Activated CD4-positive, alpha-beta T cell treated with anti-CD3 and anti-CD28 coated beads, Interleukin-2, amount 10 ng/mL, durations not matched to agents 7 days and 5 days (primary cell): ENCODE measurements at regions of chr19 and their contacts with region 1.

Region 1: GRCh38 chr19:35716801-35717666 is 769 bp upstream of the KMT2B start:
- DNase-seq: peak; percentile 97
- H3K4me3 Mint-ChIP-seq: peak overlapping the region; percentile 87
- H3K27ac Mint-ChIP-seq: peak overlapping the region; percentile 94
- H3K4me1 Mint-ChIP-seq: peaks cover 66% of the 10 kb centered on the region
- H3K27me3 Mint-ChIP-seq: no peaks in the 10 kb centered on the region

Region 2: GRCh38 chr19:35693830-35694599 is 23.0 kb before region 1 on chr19:
- CTCF ChIA-PET with region 1: interaction called, 72 read pairs
- POLR2A ChIA-PET with region 1: interaction called, 3 read pairs
- DNase-seq: peak; percentile 94
- H3K4me3 Mint-ChIP-seq: no peak overlapping the region
- H3K27ac Mint-ChIP-seq: no peak overlapping the region
- H3K4me1 Mint-ChIP-seq: peaks cover 19% of the 10 kb centered on the region
- H3K27me3 Mint-ChIP-seq: no peaks in the 10 kb centered on the region

Region 3: DNA sequence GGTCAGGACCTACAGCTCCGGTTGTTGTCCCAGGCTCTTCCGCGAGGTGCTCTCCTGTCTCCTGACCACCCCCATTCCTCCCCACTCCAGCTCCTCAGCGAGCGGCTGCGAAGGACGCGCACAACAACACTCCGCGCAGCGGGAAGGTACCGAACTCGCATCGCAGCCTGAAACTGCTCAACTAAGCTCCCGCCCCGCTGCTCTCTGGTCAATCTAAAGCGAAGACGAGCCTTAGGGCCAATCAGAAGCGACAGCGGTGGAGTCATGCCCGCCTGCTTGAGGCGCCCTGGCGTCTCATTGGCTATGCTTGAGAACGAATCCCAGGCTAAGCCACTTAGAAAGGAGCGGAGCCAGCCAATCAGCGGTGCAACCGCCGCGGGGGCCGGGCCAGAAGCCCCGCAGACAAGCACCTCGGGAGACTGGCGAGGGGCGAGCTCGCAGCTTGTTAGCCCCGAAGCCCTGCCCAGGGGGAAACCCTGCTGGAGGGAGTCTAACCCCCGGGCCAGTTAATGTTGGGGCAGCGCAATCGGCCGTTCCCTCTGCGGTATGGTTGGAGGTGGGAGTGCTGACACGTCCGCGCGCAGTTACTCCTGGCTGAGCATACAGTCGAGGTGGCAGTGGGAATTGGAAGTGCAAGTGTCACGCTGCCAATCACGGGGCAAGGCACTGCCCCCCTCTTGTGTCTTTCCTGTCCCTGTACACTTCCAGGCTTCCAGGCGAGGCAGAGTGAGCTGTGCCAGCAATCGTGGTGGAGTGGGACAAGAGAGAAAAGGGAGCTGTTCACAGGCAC is 14.6 kb before region 1 on chr19:
- CTCF ChIA-PET with region 1: interaction called, 72 read pairs
- POLR2A ChIA-PET with region 1: interaction called, 31 read pairs
- DNase-seq: peak; percentile 97
- H3K4me3 Mint-ChIP-seq: peak overlapping the region; percentile 78
- H3K27ac Mint-ChIP-seq: peak overlapping the region; percentile 94
- H3K4me1 Mint-ChIP-seq: peaks cover 10% of the 10 kb centered on the region
- H3K27me3 Mint-ChIP-seq: no peaks in the 10 kb centered on the region

Region 4: DNA sequence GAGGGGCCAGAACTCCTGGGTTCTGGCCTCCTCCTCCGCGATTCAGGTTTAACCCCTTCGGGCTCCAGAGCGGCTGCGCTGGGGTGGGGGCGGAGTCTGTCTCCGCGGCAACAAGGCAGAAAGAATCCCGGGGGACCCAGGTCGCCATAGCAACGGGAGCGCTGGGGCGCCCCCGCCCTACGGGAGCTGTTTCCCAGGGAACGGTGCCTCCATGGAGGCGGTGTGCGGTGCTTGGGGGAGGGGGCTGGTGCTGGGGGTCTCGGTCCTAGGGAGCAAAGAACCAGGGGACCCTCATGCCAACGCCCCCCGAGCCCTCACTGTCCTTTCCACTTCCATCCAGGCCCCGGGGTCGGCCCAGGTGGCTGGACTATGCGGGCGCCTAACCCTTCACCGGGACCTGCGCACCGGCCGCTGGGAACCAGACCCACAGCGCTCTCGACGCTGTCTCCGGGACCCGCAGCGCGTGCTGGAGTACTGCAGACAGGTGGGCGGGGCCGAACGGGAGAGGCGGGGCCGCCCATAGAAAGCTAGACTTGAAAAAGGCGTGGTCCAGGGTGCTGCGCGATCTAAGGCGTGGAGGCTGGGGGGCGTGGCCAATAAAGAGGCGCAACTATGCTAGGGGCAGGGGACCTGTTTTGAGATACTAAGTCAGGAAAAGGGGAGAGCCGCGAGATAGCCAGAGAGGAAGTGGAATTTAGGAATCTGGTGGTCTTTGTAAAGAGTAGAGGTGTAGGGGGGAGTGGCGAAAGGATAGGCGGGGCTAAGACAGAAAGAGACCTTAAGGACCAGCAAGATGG is 152.5 kb after region 1 on chr19:
- CTCF ChIA-PET with region 1: no interaction called
- POLR2A ChIA-PET with region 1: no interaction called
- DNase-seq: peak; percentile 86
- H3K4me3 Mint-ChIP-seq: peak overlapping the region; percentile 66
- H3K27ac Mint-ChIP-seq: peak overlapping the region; percentile 57
- H3K4me1 Mint-ChIP-seq: peaks cover 18% of the 10 kb centered on the region
- H3K27me3 Mint-ChIP-seq: peaks cover 33% of the 10 kb centered on the region